Heart right ventricle (tissue), 16 donors: ENCODE measurements at regions of chr20 and their contacts with region 1.

Region 1: GRCh38 chr20:17898548-17898994 is 70.0 kb downstream of the SNX5 start:
- DNase-seq: peak; percentile 41 to 75
- ATAC-seq: peak in 5 of 8 donors; percentile 36 to 54 (median 42)
- H3K4me3 ChIP-seq: no peak overlapping the region
- H3K27ac ChIP-seq: no peak overlapping the region
- H3K4me1 ChIP-seq: peaks cover 6 to 44% (median 35%) of the 10 kb centered on the region in 9 donors
- H3K27me3 ChIP-seq: no peaks in the 10 kb centered on the region
- CTCF ChIP-seq: peak; percentile 83 to 97 (median 95)

Region 2: DNA sequence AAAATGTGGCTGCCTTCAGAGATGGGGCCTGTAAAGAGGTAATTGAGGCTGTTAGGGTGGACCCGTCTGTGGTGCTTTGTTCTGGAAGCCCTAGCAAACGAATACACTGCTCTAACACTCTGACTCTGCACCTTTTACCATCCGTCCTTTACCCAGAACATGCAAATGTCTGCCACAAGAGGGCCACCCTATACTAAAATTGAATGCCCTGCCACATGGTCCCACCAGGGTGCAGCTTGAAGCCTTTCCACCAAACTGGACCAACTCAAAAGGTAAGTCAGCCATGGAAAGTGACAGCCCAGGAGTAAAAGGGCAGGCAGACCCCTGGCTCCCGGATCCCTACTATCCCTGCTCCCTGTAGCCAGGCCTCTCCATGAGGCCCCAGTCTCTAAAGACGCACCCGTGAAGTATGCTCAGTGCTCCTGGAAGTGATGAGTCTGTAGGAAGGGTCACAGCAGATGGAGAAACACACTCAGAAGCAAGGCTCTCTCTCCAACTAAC is 361.6 kb before region 1 on chr20:
- intact Hi-C with region 1: loop called in 8 of 10 experiments (anchors 1 to 10 kb)
- DNase-seq: peak; percentile 26 to 77
- ATAC-seq: peak; percentile 96 to 98 (median 97)
- H3K4me3 ChIP-seq: no peak overlapping the region
- H3K27ac ChIP-seq: no peak overlapping the region
- H3K4me1 ChIP-seq: peaks cover 0 to 10% (median under 1%) of the 10 kb centered on the region in 9 donors
- H3K27me3 ChIP-seq: peaks cover 0 to 2% (median 0%) of the 10 kb centered on the region in 7 donors
- CTCF ChIP-seq: peak; percentile 80 to 95 (median 89)

Region 3: GRCh38 chr20:17749975-17750721 is 148.4 kb before region 1 on chr20:
- intact Hi-C with region 1: loop called in 2 of 10 experiments (anchors 1 to 5 kb)
- DNase-seq: peak; percentile 74 to 83
- ATAC-seq: peak; percentile 91 to 97 (median 96)
- H3K4me3 ChIP-seq: no peak overlapping the region
- H3K27ac ChIP-seq: peak overlapping the region in 6 of 10 donors; percentile 45 to 70 (median 59)
- H3K4me1 ChIP-seq: peaks cover 0 to 24% (median 16%) of the 10 kb centered on the region in 9 donors
- H3K27me3 ChIP-seq: peaks cover 0 to 4% (median 0%) of the 10 kb centered on the region in 7 donors
- CTCF ChIP-seq: no peak

Region 4: GRCh38 chr20:17835240-17835935 is 63.2 kb before region 1 on chr20:
- intact Hi-C with region 1: loop called in 1 of 10 experiments (anchors 5 kb)
- DNase-seq: peak; percentile 49 to 55
- ATAC-seq: peak; percentile 14 to 81 (median 56)
- H3K4me3 ChIP-seq: no peak overlapping the region
- H3K27ac ChIP-seq: peak overlapping the region; percentile 69 to 96 (median 87)
- H3K4me1 ChIP-seq: peaks cover 6 to 34% (median 28%) of the 10 kb centered on the region in 9 donors
- H3K27me3 ChIP-seq: no peaks in the 10 kb centered on the region
- CTCF ChIP-seq: no peak

Region 5: DNA sequence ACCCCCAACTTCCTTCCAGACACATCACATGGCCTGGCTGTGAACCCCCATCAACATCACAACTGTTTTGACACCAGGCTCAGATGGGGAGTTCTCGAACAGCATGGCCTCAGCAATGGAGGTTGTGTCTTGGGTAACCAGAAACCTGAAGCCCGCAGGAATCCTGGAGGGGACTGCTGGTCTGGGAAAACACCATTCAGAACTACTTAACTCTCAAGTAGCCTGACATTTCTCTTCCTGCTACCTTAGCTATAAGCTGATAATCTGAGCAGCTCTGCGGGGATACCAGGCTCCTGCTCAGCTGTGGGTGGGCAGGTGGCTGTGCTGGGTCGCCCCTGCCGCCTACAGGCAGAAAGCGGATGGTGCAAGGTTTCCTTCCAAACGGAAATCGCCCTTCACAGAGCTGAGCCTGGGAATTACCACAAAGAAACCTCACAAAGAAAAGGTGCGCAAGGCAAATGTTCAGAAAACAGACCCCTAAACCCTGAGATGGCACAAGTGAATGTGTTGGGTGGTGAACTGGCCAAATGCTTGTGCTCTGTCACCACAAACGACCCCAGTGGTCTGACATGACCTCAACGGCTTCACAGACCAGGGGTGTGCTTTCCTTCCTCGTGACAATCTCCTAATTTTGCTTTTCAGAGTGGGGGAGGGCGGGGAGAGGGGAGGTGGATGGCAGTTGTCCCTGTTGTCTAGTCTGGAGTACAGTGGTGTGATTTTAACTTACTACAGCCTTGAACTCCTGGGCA is 40.5 kb after region 1 on chr20:
- intact Hi-C with region 1: loop called in 1 of 10 experiments (anchors 5 kb)
- DNase-seq: peak; percentile 55 to 57
- ATAC-seq: peak; percentile 63 to 87 (median 76)
- H3K4me3 ChIP-seq: no peak overlapping the region
- H3K27ac ChIP-seq: peak overlapping the region in 2 of 10 donors; percentile 29 to 54
- H3K4me1 ChIP-seq: peaks cover 3 to 54% (median 33%) of the 10 kb centered on the region in 9 donors
- H3K27me3 ChIP-seq: no peaks in the 10 kb centered on the region
- CTCF ChIP-seq: peak; percentile 81 to 94 (median 89)